OCI-LY7 (cell line): ENCODE measurements at regions of chr7 and their contacts with region 1.

Region 1: DNA sequence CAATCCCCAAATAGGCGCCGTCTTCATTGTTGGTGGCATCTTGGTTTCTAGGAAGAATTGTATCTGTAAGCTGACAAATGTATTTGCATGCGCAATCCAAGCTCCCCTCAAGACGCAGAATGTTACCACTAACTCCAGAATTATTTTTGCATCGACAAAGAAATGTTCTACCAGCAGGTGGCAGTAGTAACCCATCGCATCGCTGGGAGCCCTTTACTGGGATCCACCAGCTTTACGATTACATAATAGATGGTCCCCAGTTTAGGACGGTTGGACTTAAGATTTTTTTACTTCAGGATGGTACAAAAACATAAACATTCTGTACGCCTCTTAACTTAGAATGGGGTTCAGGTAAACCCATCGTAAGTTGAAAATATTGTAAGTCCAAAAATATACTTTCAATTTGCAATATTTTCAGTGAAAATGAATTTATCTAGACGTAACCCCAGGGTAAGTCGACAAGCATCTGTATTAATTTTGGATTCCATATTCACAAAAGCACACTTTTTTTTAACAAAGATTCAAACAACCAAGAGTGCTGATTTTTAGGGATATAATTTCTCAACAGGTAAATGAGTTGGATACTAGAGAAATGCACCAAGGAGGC is 114.0 kb upstream of the COBL start:
- DNase-seq: peak; percentile 58
- H3K4me3 ChIP-seq: no peak overlapping the region
- H3K27ac ChIP-seq: no peak overlapping the region
- H3K4me1 ChIP-seq: no peaks in the 10 kb centered on the region
- CTCF ChIP-seq: peak; percentile 90

Region 2: GRCh38 chr7:51340029-51340851 is 90.3 kb before region 1 on chr7:
- CTCF ChIA-PET with region 1: no interaction called
- POLR2A ChIA-PET with region 1: no interaction called
- intact Hi-C with region 1: no loop called
- DNase-seq: no peak
- H3K4me3 ChIP-seq: no peak overlapping the region
- H3K27ac ChIP-seq: no peak overlapping the region
- H3K4me1 ChIP-seq: no peaks in the 10 kb centered on the region
- CTCF ChIP-seq: no peak

Region 3: DNA sequence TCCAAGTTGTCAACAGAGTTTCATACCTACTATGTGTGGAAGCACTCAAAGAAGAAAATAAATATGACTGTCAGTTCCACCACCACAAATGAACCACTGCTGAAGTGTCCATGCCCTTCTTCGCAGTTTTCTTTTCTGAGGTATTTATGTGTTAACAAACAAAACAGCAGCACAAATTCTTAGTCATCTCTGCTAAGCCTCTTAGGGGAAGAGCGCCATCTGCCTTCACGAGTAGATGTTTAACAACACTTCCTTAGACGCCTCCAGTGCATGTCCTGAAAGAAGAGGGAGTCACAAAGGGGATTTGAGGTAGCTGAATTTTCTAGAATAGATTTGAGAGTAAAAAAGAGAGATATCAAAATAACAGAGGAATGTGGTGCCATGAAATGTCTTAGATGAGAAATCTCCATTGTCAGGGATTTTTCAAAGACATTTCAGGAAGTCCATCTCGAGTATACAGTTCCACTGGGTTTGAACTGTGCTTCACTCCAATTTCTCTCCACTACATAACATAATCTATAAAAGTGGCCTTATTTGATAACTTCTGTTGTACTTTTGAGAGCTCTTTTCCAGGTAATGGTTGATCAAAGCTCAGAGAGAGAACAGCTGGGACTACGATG is 829.6 kb after region 1 on chr7:
- CTCF ChIA-PET with region 1: no interaction called
- POLR2A ChIA-PET with region 1: no interaction called
- intact Hi-C with region 1: loop called (anchors 5 kb)
- DNase-seq: no peak
- H3K4me3 ChIP-seq: no peak overlapping the region
- H3K27ac ChIP-seq: no peak overlapping the region
- H3K4me1 ChIP-seq: no peaks in the 10 kb centered on the region
- CTCF ChIP-seq: peak; percentile 33